ENCODE measurements at regions of chr5 and their contacts with region 1.

Region 1: DNA sequence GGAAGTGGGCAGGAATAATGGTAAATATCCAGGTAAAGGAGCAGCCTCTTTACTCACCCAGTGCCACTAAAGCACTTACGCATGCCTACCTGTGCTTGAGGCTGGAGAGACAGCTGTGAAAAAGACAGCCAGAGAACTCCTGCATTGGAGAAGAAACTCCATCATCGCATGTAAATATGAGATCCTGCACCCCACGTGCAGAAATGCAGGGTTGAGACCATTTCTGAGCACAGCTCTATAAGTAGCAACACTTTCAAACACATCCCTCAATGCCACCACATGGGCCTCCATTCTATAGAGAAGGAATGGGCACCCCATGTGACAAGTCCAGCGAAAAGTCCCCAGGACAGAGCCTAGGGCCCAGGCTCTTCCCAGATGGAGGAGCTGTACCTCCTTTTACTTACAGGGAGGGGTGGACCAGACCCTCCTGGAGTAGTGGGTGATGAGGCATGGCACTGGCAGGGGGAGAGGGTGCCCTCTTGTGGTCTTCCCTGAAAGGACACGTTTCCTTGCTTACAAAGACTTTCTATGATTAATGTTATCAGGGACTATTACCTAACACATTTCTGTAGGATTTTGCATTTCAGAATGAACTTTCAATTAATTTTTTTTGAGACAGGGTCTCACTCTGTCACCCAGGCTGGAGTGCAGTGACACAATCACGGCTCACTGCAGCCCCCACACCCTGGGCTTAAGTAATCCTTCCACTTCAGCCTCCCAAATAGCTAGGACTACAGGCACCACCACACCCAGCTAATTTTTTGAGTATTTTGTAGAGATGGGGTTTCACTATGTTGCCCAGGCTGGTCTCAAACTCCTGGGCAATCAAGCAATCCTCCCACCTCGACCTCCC is 55.3 kb upstream of the IL17B start:
- DNase-seq: peak; percentile 69
- H3K4me3 ChIP-seq: no peak overlapping the region
- H3K27ac ChIP-seq: no peak overlapping the region
- H3K4me1 ChIP-seq: no peaks in the 10 kb centered on the region
- H3K27me3 ChIP-seq: no peaks in the 10 kb centered on the region
- CTCF ChIP-seq: peak; percentile 87

Region 2: GRCh38 chr5:149317281-149318048 is 116.9 kb before region 1 on chr5:
- CTCF ChIA-PET with region 1: no interaction called
- POLR2A ChIA-PET with region 1: no interaction called
- intact Hi-C with region 1: loop called (anchors 2 kb)
- DNase-seq: peak; percentile 65
- H3K4me3 ChIP-seq: no peak overlapping the region
- H3K27ac ChIP-seq: no peak overlapping the region
- H3K4me1 ChIP-seq: peaks cover 11% of the 10 kb centered on the region
- H3K27me3 ChIP-seq: no peaks in the 10 kb centered on the region
- CTCF ChIP-seq: peak; percentile 79

Region 3: GRCh38 chr5:149367249-149367971 is 67.0 kb before region 1 on chr5:
- CTCF ChIA-PET with region 1: interaction called, 9 read pairs
- POLR2A ChIA-PET with region 1: no interaction called
- intact Hi-C with region 1: loop called (anchors 5 kb)
- DNase-seq: peak; percentile 83
- H3K4me3 ChIP-seq: no peak overlapping the region
- H3K27ac ChIP-seq: no peak overlapping the region
- H3K4me1 ChIP-seq: no peaks in the 10 kb centered on the region
- H3K27me3 ChIP-seq: no peaks in the 10 kb centered on the region
- CTCF ChIP-seq: peak; percentile 88

Region 4: GRCh38 chr5:149381987-149382340 is 52.4 kb before region 1 on chr5:
- CTCF ChIA-PET with region 1: interaction called, 18 read pairs
- POLR2A ChIA-PET with region 1: no interaction called
- intact Hi-C with region 1: loop called (anchors 1 kb)
- DNase-seq: peak; percentile 62
- H3K4me3 ChIP-seq: no peak overlapping the region
- H3K27ac ChIP-seq: no peak overlapping the region
- H3K4me1 ChIP-seq: no peaks in the 10 kb centered on the region
- H3K27me3 ChIP-seq: no peaks in the 10 kb centered on the region
- CTCF ChIP-seq: peak; percentile 95

Region 5: GRCh38 chr5:149459891-149460290 is 25.5 kb after region 1 on chr5:
- CTCF ChIA-PET with region 1: no interaction called
- POLR2A ChIA-PET with region 1: no interaction called
- intact Hi-C with region 1: no loop called
- DNase-seq: no peak
- H3K4me3 ChIP-seq: no peak overlapping the region
- H3K27ac ChIP-seq: no peak overlapping the region
- H3K4me1 ChIP-seq: no peaks in the 10 kb centered on the region
- H3K27me3 ChIP-seq: no peaks in the 10 kb centered on the region
- CTCF ChIP-seq: no peak

Region 6: GRCh38 chr5:149551200-149552037 is 117.0 kb after region 1 on chr5 and contains the start of gene CSNK1A1:
- CTCF ChIA-PET with region 1: no interaction called
- POLR2A ChIA-PET with region 1: no interaction called
- intact Hi-C with region 1: no loop called
- DNase-seq: peak; percentile 99
- H3K4me3 ChIP-seq: peak within 1 kb of the TSS; percentile 91
- H3K27ac ChIP-seq: peak within 1 kb of the TSS; percentile 95
- H3K4me1 ChIP-seq: peaks cover 30% of the 10 kb centered on the region
- H3K27me3 ChIP-seq: no peaks in the 10 kb centered on the region
- CTCF ChIP-seq: peak; percentile 57
- total RNA-seq, gene CSNK1A1: 237 and 244 TPM in 2 replicates

Region 7: DNA sequence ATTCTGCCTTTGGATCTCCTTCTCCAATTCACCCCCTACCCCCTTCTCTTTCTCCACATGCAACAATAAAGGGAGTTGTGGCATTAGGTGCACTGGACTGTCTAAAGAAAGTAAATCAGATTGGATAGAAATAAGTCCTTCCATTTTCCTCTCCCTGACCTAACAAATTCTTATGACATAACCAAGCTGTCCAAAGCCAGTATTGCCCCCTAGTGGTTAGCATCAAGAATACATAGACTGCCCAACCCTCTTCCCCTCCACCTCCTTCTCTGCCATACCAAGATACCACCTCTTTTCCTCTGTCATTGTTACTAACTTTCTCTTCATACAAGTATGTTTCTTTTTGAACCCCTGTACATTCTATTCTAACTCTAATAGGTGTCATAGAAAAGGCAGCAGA is 341.4 kb after region 1 on chr5:
- CTCF ChIA-PET with region 1: no interaction called
- POLR2A ChIA-PET with region 1: no interaction called
- intact Hi-C with region 1: no loop called
- DNase-seq: peak; percentile 39
- H3K4me3 ChIP-seq: no peak overlapping the region
- H3K27ac ChIP-seq: no peak overlapping the region
- H3K4me1 ChIP-seq: no peaks in the 10 kb centered on the region
- H3K27me3 ChIP-seq: no peaks in the 10 kb centered on the region
- CTCF ChIP-seq: peak; percentile 53